ENCODE measurements at regions of chr15 and their contacts with region 1.

Region 1: DNA sequence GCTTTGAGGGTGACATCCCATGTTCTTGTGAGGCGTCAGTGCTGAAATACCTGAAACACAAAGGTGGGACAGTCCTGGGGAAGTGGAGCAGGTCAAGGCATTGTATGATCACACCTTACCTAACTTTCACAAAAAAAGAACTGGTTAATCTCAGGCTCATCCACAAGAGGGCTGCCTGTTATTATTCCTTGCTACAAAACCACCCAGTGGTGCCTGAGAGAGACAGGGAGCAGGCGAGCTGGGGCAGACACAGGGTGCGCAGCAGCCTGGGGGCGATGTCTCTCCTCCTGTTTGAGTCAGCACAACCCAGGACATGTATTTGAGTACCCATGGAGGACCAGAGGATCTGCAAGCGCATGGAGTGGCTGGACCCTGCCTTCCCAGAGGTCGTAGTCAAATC is 316.8 kb upstream of the ATP10A start:
- DNase-seq: no peak
- ATAC-seq: peak in 3 of 4 donors; percentile 61 to 79 (median 68)
- H3K4me3 ChIP-seq: no peak overlapping the region
- H3K27ac ChIP-seq: no peak overlapping the region
- H3K4me1 ChIP-seq: no peaks in the 10 kb centered on the region
- H3K27me3 ChIP-seq: no peaks in the 10 kb centered on the region
- CTCF ChIP-seq: peak in 9 of 12 donors; percentile 8 to 48 (median 34)
- POLR2A ChIP-seq: no peak

Region 2: GRCh38 chr15:25971053-25971452 is 208.9 kb before region 1 on chr15:
- intact Hi-C with region 1: no loop called
- DNase-seq: no peak
- ATAC-seq: no peak
- H3K4me3 ChIP-seq: no peak overlapping the region
- H3K27ac ChIP-seq: no peak overlapping the region
- H3K4me1 ChIP-seq: peaks cover 0 to 6% (median 0%) of the 10 kb centered on the region in 12 donors
- H3K27me3 ChIP-seq: no peaks in the 10 kb centered on the region
- CTCF ChIP-seq: no peak
- POLR2A ChIP-seq: no peak

Region 3: DNA sequence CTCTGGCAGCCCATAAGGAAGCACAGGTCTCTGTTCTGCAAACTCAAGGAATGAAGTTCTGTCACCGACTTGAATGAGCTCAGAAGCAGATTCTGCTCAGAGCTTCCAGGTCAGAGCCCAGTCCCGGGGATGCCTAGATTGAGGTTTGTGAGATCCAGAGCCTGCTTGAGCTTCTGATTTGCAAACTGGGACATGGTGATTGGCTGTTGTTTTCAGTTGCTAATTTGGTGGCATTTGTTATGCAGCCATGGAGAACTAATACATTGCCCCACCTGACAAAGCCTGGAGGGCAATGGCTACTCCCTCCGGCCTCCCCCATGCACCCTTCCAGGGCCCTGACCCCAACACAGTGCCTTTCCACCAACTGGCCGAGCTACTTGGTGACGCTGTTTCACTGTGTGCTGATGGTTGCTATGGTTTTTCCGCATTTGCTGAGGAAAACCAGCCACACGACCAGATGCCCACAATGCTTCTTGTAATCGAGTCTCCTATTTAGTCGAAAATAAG is 62.7 kb after region 1 on chr15:
- intact Hi-C with region 1: loop called in 1 of 10 experiments (anchors 10 kb)
- DNase-seq: no peak
- ATAC-seq: no peak
- H3K4me3 ChIP-seq: no peak overlapping the region
- H3K27ac ChIP-seq: no peak overlapping the region
- H3K4me1 ChIP-seq: no peaks in the 10 kb centered on the region
- H3K27me3 ChIP-seq: no peaks in the 10 kb centered on the region
- CTCF ChIP-seq: no peak
- POLR2A ChIP-seq: no peak

Measured in heart left ventricle (tissue), 16 donors.